ENCODE measurements at regions of chr2 and their contacts with region 1.

Region 1: GRCh38 chr2:201171259-201171814 is 11.6 kb upstream of the CASP10 start:
- DNase-seq: no peak
- ATAC-seq: peak in 4 of 8 donors; percentile 12 to 31 (median 29)
- H3K4me3 ChIP-seq: no peak overlapping the region
- H3K27ac ChIP-seq: peak overlapping the region in 1 of 10 donors; percentile 11
- H3K4me1 ChIP-seq: peaks cover 0 to 14% (median 0%) of the 10 kb centered on the region in 9 donors
- H3K27me3 ChIP-seq: no peaks in the 10 kb centered on the region
- CTCF ChIP-seq: no peak

Region 2: DNA sequence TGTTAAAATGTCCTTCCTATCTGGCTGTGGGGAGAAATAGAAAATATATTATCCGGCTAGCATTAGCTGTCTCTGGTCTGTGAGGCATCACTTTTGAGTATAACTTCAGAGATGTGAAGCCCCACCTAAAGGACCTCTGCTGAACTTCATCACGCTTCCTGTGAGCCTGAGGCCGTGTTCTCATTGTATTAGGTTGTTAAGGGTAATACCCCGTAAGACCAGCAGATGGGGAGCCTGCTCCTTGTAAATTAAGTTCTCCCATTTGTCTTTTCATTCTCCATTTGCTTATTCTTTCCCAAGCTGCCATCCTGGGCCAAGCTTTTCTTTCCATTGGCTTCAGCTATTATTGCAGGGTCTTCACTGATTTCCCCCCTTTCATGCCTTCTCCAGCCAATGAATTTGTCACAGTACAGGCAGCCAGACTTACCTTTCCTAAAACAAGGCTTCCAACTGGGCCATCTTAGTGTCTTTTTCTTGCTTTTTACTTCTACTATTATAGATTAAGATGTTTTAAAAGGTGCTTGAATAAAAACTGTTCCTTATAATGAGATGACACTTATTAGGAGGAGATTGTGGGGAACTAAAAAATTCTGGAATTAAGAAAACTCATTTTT is 269.8 kb before region 1 on chr2:
- intact Hi-C with region 1: loop called in 8 of 10 experiments (anchors 2 to 10 kb)
- DNase-seq: peak in 1 of 2 donors; percentile 66
- ATAC-seq: peak; percentile 77 to 88 (median 82)
- H3K4me3 ChIP-seq: no peak overlapping the region
- H3K27ac ChIP-seq: peak overlapping the region in 3 of 10 donors; percentile 6 to 51 (median 19)
- H3K4me1 ChIP-seq: peaks cover 0 to 18% (median 5%) of the 10 kb centered on the region in 9 donors
- H3K27me3 ChIP-seq: no peaks in the 10 kb centered on the region
- CTCF ChIP-seq: peak; percentile 51 to 86 (median 76)

Region 3: DNA sequence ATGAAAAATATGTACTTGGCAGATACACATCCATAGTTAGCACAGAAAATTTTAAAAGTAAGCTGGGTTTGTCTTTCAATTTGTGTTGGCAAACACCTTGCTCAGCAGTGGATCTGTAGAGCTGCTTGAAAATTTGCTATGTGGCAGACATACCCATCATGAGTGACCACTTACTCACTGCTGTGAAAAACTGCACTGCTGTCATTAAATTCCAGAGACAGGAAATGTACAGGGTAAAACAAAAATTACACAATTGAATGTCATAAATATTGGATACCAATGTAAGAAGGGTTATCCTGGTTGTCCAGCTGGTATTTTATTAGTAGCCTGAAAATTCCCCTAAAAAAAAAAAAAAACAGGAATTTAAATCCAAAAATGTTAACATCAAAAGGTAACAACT is 257.7 kb before region 1 on chr2:
- intact Hi-C with region 1: loop called in 2 of 10 experiments (anchors 5 to 10 kb)
- DNase-seq: no peak
- ATAC-seq: no peak
- H3K4me3 ChIP-seq: no peak overlapping the region
- H3K27ac ChIP-seq: no peak overlapping the region
- H3K4me1 ChIP-seq: no peaks in the 10 kb centered on the region
- H3K27me3 ChIP-seq: no peaks in the 10 kb centered on the region
- CTCF ChIP-seq: no peak

Region 4: DNA sequence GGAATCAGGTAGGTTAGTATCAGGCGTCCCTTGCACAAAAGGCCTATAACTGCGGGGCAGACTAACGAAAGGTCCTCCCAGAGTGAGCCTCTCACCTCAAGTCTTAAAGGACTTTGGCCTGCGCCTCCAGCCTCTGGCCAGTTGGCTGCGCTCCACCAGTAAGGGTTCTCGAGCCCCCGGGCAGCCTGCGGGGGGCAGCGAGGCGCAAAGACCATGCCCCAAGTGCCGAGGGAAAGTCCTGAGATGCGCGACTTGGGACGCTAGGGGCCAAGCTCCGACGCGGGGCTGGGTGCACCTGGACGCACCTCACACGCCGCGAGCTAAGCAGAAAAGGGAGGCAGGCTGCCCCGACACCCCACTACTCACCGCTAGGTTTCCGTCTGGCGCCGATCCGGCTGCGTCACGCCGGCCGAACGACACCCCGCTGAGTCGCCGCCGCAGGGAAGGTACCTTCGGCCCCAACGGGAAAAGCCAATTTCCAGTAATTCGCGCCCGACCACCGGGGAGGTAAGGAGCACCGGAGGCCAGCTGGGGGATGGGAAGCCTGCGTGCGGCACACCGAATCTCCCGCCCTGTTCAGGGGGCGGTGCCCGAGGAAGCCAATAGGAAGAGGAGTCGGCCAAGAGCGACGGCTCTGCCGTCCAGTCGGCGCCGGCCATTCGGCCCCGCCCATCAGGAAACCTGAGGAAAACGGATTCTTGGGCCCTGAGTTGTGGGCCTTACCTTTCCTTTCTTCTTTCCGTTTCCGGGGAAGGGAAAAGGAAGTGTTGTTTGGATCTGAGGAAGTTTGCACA is 208.0 kb before region 1 on chr2 and contains the start of gene ORC2:
- intact Hi-C with region 1: loop called in 3 of 10 experiments (anchors 2 to 5 kb)
- DNase-seq: peak; percentile 95
- ATAC-seq: peak; percentile 99 to 100 (median 99)
- H3K4me3 ChIP-seq: peak within 1 kb of the TSS; percentile 62 to 96 (median 89)
- H3K27ac ChIP-seq: peak within 1 kb of the TSS; percentile 80 to 93 (median 91)
- H3K4me1 ChIP-seq: peaks cover 0 to 53% (median 41%) of the 10 kb centered on the region in 9 donors
- H3K27me3 ChIP-seq: no peaks in the 10 kb centered on the region
- CTCF ChIP-seq: peak; percentile 0 to 69 (median 54)
- total RNA-seq, gene ORC2: 18.6 to 38.8 (median 27.5) TPM

Region 5: DNA sequence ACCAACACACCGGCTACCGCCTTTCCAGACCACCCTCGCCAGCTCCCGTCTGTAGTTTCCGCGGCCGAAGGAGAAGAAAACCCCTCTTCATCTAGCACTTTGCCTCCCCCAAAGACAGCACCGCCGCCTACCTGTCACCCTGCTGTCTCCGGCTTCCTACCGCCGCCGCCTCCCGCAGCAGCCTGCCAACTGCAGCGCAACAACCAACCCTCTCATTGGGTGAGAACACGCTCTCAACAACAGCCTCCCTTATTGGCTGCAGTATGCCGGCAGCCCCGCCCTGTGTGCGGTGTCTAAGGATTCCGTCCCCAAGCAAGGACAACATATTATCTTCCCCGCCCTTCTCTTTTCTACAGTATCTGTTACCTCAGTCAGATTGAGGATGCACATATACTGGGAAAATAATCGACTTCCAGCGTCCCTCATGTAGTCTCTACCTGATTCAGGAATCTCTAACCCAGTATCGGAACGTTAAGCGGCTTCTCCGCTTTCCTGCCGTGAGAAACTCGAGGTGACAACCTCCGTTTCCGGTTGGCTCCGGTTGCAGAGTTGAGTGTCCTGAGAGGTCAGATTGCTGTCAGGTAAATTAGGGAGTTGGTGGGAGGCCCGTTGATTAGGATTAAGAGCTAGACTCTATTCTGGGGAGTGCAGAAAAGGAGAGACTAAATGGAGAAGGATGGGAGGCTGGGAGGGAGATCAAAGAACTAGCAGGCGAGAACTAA is 99.7 kb before region 1 on chr2 and contains the starts of genes HYCC2 and NDUFB3:
- intact Hi-C with region 1: loop called in 1 of 10 experiments (anchors 5 kb)
- DNase-seq: peak; percentile 90 to 92
- ATAC-seq: peak; percentile 99 to 100 (median 99)
- H3K4me3 ChIP-seq: peak within 1 kb of the TSS; percentile 68 to 97 (median 88)
- H3K27ac ChIP-seq: peak within 1 kb of the TSS; percentile 81 to 97 (median 90)
- H3K4me1 ChIP-seq: peaks cover 4 to 70% (median 50%) of the 10 kb centered on the region in 9 donors
- H3K27me3 ChIP-seq: no peaks in the 10 kb centered on the region
- CTCF ChIP-seq: peak in 6 of 9 donors; percentile 28 to 65 (median 46)
- total RNA-seq, gene HYCC2: 9.4 to 15.3 (median 12.9) TPM
- total RNA-seq, gene NDUFB3: 313 to 513 (median 457) TPM

Region 6: GRCh38 chr2:201090574-201090973 is 80.8 kb before region 1 on chr2:
- intact Hi-C with region 1: loop called in 1 of 10 experiments (anchors 5 kb)
- DNase-seq: no peak
- ATAC-seq: no peak
- H3K4me3 ChIP-seq: no peak overlapping the region
- H3K27ac ChIP-seq: no peak overlapping the region
- H3K4me1 ChIP-seq: peaks cover 0 to 8% (median 0%) of the 10 kb centered on the region in 9 donors
- H3K27me3 ChIP-seq: no peaks in the 10 kb centered on the region
- CTCF ChIP-seq: no peak

Region 7: GRCh38 chr2:201118121-201118960 is 53.0 kb before region 1 on chr2:
- intact Hi-C with region 1: loop called in 1 of 10 experiments (anchors 10 kb)
- DNase-seq: peak; percentile 86 to 92
- ATAC-seq: peak; percentile 49 to 75 (median 66)
- H3K4me3 ChIP-seq: peak overlapping the region; percentile 73 to 96 (median 84)
- H3K27ac ChIP-seq: peak overlapping the region; percentile 98 to 100 (median 100)
- H3K4me1 ChIP-seq: peaks cover 3 to 59% (median 50%) of the 10 kb centered on the region in 9 donors
- H3K27me3 ChIP-seq: no peaks in the 10 kb centered on the region
- CTCF ChIP-seq: peak; percentile 26 to 70 (median 52)

Region 8: GRCh38 chr2:201220102-201220570 is 48.8 kb after region 1 on chr2:
- intact Hi-C with region 1: no loop called
- DNase-seq: peak in 1 of 2 donors; percentile 65
- ATAC-seq: peak; percentile 51 to 88 (median 76)
- H3K4me3 ChIP-seq: no peak overlapping the region
- H3K27ac ChIP-seq: peak overlapping the region in 9 of 10 donors; percentile 31 to 78 (median 42)
- H3K4me1 ChIP-seq: peaks cover 2 to 46% (median 35%) of the 10 kb centered on the region in 9 donors
- H3K27me3 ChIP-seq: no peaks in the 10 kb centered on the region
- CTCF ChIP-seq: no peak

Measured in heart right ventricle (tissue), 16 donors.